ENCODE measurements at regions of chr17 and their contacts with region 1.

Region 1: DNA sequence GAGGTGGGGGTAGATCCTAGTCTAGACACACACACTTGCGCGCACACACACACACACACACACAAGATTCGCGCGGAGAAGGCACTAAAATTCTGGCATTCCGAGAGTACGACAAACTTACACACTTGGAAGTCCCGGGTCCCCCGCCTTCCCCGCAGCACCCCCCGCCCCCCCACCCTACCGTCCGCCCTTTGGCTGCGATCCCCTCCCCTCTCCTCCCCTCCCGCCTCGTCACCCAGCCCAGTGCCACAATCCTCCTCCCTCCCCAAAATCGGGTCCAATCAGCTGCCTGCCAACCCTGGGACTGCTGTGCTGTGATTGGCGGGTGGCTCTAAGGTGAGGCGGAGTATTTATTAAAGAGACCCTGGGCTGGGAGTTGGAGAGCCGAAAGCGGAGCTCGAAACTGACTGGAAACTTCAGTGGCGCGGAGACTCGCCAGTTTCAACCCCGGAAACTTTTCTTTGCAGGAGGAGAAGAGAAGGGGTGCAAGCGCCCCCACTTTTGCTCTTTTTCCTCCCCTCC is at the start of gene SOX9:
- DNase-seq: peak; percentile 95
- H3K4me3 Mint-ChIP-seq: peak within 1 kb of the TSS; percentile 97
- H3K27ac Mint-ChIP-seq: peak within 1 kb of the TSS; percentile 46
- H3K4me1 Mint-ChIP-seq: peaks cover 24% of the 10 kb centered on the region
- H3K27me3 Mint-ChIP-seq: no peaks in the 10 kb centered on the region
- CTCF ChIP-seq: no peak
- total RNA-seq, gene SOX9: 2.6 and 4.5 TPM in 2 replicates

Region 2: DNA sequence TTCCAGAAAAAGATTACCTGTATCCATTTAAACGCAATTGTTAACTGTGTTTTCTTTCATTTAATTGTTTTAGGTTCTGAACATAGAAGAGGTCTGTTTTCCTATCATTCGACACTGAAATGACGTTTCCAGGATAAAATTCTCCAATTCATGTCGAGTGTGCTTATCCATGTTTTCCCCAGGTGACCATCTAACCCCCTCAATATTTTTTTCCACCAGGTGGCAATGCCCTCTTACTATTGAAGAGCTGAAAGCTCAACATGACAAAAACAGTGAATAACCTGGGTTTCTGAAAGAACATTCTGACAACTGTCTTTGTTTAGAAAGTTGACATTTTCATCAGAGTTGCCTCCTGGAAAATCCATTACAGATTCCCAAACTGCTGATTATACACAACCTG is 1002.7 kb before region 1 on chr17:
- CTCF ChIA-PET with region 1: interaction called, 4 read pairs
- POLR2A ChIA-PET with region 1: no interaction called
- intact Hi-C with region 1: loop called (anchors 2 kb)
- DNase-seq: peak; percentile 57
- H3K4me3 Mint-ChIP-seq: no peak overlapping the region
- H3K27ac Mint-ChIP-seq: peak overlapping the region; percentile 5
- H3K4me1 Mint-ChIP-seq: peaks cover 9% of the 10 kb centered on the region
- H3K27me3 Mint-ChIP-seq: no peaks in the 10 kb centered on the region
- CTCF ChIP-seq: peak; percentile 49

Region 3: DNA sequence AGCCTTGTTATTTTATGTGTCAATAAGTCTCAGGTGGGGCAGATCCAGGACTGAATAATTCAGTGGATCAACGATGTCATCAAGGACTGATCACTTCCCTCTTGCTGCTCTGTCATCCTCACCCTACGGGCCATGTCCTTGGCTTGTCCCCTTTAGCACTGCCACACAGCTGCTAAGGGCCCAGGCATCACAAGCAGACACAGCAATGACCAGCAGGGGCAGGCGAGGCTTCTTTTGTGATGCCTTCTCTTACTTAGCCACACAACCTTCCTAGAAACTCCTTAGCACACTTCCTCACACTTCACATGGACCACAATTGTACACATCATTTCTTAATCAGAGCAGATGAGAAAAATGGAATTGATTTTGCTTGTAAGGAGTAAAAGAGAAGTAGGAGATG is 356.2 kb before region 1 on chr17:
- CTCF ChIA-PET with region 1: no interaction called
- POLR2A ChIA-PET with region 1: no interaction called
- intact Hi-C with region 1: loop called (anchors 2 kb)
- DNase-seq: peak; percentile 36
- H3K4me3 Mint-ChIP-seq: no peak overlapping the region
- H3K27ac Mint-ChIP-seq: no peak overlapping the region
- H3K4me1 Mint-ChIP-seq: peaks cover 3% of the 10 kb centered on the region
- H3K27me3 Mint-ChIP-seq: no peaks in the 10 kb centered on the region
- CTCF ChIP-seq: no peak

Region 4: DNA sequence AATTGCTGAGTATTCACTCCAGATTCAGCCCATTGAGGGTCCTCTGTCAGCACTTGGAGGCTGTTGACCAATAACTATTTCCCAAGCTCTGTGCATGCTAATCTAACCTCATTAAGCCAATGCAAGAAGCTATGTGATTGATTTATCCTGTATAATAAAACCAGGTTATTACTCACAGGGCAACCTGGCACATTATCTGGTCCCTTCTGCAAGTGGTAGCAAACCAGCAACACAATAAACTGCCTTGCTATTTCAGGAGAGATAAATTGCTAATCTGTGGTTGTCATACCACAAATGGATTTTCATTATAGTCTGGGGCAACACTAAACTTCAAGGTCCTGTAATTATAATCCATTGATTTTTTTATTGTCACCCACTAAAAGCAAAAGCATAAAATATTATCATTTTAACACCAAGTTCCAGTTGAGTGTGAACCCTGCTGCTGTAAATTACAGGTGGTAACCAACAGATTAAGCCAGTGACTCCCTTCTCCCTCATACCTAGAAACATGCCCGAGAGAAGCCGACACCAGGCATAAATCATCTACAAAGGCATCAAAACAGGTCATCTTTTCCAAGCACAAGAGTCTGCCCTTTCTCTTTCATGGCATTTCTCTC is 51.0 kb before region 1 on chr17:
- CTCF ChIA-PET with region 1: no interaction called
- POLR2A ChIA-PET with region 1: no interaction called
- intact Hi-C with region 1: no loop called
- DNase-seq: no peak
- H3K4me3 Mint-ChIP-seq: no peak overlapping the region
- H3K27ac Mint-ChIP-seq: no peak overlapping the region
- H3K4me1 Mint-ChIP-seq: no peaks in the 10 kb centered on the region
- H3K27me3 Mint-ChIP-seq: no peaks in the 10 kb centered on the region
- CTCF ChIP-seq: no peak

Region 5: DNA sequence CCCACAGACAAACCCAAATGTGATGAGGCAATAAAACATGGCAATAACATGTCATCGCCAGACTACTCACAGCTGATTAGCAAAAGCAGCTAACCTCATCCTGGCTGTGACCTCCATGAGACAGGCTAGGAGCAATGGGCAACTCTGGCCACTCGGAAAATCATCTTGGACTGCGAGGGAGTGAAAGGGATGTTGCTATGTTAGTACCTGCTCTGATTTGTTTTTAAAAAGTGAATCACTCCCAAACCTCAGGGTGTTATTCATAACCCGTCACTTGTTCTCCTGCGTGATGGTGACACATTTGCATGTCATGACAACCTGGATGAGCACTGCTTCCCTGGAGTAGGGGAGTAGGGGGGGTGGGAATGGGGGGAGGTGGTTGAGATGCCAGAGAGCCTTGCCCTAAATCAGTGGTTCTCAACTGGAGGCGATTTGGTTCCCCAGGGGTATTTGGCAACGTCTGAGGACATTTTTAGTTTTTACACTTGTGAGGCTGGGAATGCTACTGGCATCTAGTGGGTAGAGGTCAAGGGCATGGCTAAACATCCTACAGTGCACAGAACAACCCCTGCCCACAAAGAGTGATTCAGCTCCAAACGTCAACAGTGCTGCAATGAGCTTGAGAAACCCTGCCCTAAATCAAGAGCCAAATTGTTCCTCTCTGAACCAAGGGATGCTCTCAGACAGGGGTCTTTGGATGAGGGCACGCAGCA is 241.8 kb after region 1 on chr17:
- CTCF ChIA-PET with region 1: no interaction called
- POLR2A ChIA-PET with region 1: interaction called, 4 read pairs
- intact Hi-C with region 1: loop called (anchors 1 kb)
- DNase-seq: peak; percentile 93
- H3K4me3 Mint-ChIP-seq: peak overlapping the region; percentile 45
- H3K27ac Mint-ChIP-seq: peak overlapping the region; percentile 83
- H3K4me1 Mint-ChIP-seq: peaks cover 33% of the 10 kb centered on the region
- H3K27me3 Mint-ChIP-seq: no peaks in the 10 kb centered on the region
- CTCF ChIP-seq: no peak

Region 6: DNA sequence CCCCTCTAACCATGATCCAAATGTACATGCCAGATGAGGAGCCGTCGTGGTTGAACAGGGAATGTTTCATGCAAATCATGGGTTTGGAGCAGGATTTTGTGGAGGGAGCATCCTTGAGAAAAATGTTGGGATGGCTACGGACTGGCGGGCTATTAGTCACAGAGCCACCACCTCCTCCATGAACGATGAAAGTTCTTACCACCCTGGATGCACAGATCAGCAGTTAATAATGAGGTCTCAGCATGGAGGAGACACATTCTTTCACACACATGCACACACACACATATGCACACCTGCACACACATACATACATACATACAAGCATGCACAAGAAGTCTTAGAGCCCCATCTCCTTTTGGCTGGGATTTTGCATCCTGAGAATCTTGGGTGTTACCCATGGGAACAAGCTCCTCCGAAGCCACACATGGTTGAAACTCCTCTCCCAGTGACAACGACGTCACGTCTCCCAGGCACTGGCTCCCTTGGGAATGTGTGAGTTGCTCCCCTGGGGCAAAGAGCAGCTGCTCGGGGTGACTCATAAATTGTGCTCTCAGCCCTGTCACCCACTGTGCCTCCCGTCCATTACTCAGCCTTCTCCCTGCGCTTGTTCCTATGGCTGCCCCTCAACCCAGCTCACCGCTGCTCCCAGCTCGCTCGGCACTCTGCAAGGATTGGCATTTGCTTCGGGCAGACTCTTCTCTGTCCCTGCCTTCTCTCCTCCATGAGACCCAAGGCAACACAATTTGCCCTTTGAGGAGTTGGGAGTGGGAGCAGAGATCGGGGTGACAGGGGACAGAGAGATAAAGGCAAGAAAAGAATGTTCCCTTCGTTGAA is 344.7 kb after region 1 on chr17:
- CTCF ChIA-PET with region 1: no interaction called
- POLR2A ChIA-PET with region 1: no interaction called
- intact Hi-C with region 1: loop called (anchors 1 kb)
- DNase-seq: peak; percentile 97
- H3K4me3 Mint-ChIP-seq: peak overlapping the region; percentile 63
- H3K27ac Mint-ChIP-seq: no peak overlapping the region
- H3K4me1 Mint-ChIP-seq: peaks cover 50% of the 10 kb centered on the region
- H3K27me3 Mint-ChIP-seq: no peaks in the 10 kb centered on the region
- CTCF ChIP-seq: no peak

Region 7: DNA sequence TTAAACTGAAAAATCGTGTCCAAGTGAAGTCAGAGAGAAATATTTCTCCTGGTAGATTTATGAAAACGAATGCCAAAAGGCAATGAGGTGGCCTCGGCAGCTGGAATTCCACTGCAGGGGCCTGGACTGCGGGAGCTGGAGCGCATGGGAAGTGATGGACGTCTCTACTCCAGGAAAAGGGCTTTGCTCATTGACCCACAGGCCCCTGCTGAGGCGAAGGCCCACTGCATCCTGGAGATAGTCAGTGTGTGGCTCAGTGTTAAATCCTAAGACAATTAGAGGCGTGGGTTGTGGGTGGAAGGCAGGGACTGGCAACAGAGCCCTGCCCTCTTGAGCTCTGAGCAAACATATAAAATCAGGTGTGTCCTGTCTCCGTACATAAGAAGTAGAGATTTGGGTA is 780.4 kb after region 1 on chr17:
- CTCF ChIA-PET with region 1: no interaction called
- POLR2A ChIA-PET with region 1: no interaction called
- intact Hi-C with region 1: no loop called
- DNase-seq: no peak
- H3K4me3 Mint-ChIP-seq: no peak overlapping the region
- H3K27ac Mint-ChIP-seq: no peak overlapping the region
- H3K4me1 Mint-ChIP-seq: no peaks in the 10 kb centered on the region
- H3K27me3 Mint-ChIP-seq: no peaks in the 10 kb centered on the region
- CTCF ChIP-seq: no peak

Measured in MCF 10A (cell line).